ENCODE measurements at regions of chr16 and their contacts with region 1.

Region 1: DNA sequence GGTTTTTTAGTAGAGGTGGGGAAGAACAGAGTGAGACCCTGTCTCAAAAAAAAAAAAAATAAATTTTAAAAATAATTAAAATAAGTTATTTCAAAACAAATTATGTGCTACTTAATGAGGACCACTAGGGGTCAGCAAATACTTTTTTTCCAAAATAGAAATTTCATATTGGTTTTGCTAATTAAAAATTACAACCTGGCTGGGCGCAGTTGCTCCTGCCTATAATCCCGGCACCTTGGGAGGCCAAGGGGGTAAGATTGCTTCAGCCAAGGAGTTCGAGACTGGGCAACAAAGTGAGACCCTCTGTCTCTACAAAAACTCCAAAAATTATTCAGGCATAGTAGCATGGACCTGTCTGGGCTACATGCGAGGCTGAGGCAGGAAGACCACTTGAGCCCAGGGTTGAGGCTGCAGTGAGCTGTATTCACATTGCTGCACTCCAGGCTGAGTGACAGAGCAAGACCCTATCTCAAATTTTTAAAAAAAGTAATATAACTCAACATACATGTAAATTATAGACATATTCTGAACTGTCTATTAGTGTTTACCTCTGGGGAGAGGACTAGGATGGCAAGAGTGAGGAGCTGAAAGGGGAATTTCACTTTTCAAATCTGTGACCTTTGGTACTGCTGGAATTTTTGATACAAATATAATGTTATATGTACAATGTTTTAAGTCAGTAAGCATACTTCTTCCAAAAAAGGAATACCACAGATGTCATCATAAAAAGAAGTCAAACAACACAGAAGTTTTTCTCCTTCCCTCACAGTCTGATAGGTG is 8.1 kb downstream of the MEIOB start:
- DNase-seq: no peak
- ATAC-seq: peak; percentile 31 to 62 (median 58)
- H3K4me3 ChIP-seq: no peak overlapping the region
- H3K27ac ChIP-seq: no peak overlapping the region
- H3K4me1 ChIP-seq: no peaks in the 10 kb centered on the region
- H3K27me3 ChIP-seq: no peaks in the 10 kb centered on the region
- CTCF ChIP-seq: peak; percentile 50 to 73 (median 66)
- POLR2A ChIP-seq: no peak

Region 2: GRCh38 chr16:1696863-1697262 is 167.0 kb before region 1 on chr16:
- intact Hi-C with region 1: no loop called
- DNase-seq: no peak
- ATAC-seq: no peak
- H3K4me3 ChIP-seq: no peak overlapping the region
- H3K27ac ChIP-seq: no peak overlapping the region
- H3K4me1 ChIP-seq: no peaks in the 10 kb centered on the region
- H3K27me3 ChIP-seq: no peaks in the 10 kb centered on the region
- CTCF ChIP-seq: no peak
- POLR2A ChIP-seq: no peak

Region 3: DNA sequence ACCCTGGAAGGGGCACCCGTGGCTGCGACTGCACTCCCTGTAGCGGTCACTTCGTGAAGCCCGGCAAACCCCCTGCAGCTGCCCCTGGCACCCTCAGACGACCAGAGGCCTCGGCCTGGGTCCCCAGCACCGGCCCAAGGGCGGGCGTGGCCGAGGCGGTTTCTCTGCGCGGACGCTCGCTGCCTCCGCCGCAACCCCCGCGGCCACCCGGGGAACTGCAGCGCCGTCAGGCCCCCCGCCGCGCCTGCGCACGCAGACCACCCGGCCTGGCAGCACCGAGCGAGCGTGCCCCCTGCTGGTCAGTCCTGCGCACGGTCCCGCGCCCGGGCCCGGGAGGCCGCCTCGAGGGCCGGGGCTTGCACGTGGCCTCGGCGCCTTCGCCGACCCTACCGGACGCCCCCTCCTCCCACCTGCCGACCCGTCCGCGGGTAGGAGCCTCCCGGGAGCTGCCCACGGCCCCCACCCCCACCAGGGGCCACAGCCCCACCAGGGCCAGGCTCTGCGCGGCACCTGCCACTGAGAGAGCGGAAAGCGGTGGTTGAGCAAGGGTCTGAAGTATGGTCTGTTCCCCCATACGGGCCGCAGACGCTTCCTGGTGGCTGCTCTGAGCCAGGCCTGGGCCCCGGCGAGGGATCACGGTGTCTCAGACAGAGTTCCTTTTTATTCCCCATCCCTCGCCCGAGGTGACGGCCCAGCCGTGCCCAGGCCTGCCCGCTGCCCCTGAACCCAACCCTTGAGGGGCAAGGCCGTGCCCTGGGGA is 65.9 kb after region 1 on chr16:
- intact Hi-C with region 1: loop called (anchors 5 kb)
- DNase-seq: peak; percentile 91 to 92 (median 91)
- ATAC-seq: peak; percentile 87 to 95 (median 91)
- H3K4me3 ChIP-seq: peak overlapping the region; percentile 55 to 57 (median 56)
- H3K27ac ChIP-seq: peak overlapping the region; percentile 22 to 70 (median 33)
- H3K4me1 ChIP-seq: peaks cover 0 to 22% (median 0%) of the 10 kb centered on the region in 4 donors
- H3K27me3 ChIP-seq: no peaks in the 10 kb centered on the region
- CTCF ChIP-seq: peak; percentile 98 to 100 (median 99)
- POLR2A ChIP-seq: peak; percentile 15

Measured in right lobe of liver (tissue), 6 donors.